Transverse colon (tissue), 4 donors: ENCODE measurements at regions of chr5 and their contacts with region 1.

Region 1: GRCh38 chr5:177064500-177065277 is 22.0 kb upstream of the FGFR4 start:
- DNase-seq: no peak
- H3K4me3 ChIP-seq: no peak overlapping the region
- H3K27ac ChIP-seq: no peak overlapping the region
- H3K4me1 ChIP-seq: peaks cover 0 to 9% (median 1%) of the 10 kb centered on the region in 4 donors
- H3K27me3 ChIP-seq: no peaks in the 10 kb centered on the region
- CTCF ChIP-seq: no peak
- EP300 ChIP-seq: no peak
- POLR2A ChIP-seq: no peak

Region 2: GRCh38 chr5:175789670-175790069 is 1275.0 kb before region 1 on chr5:
- in situ Hi-C with region 1: no loop called
- intact Hi-C with region 1: loop called (anchors 5 kb)
- DNase-seq: no peak
- H3K4me3 ChIP-seq: no peak overlapping the region
- H3K27ac ChIP-seq: no peak overlapping the region
- H3K4me1 ChIP-seq: no peaks in the 10 kb centered on the region
- H3K27me3 ChIP-seq: peaks cover 37% of the 10 kb centered on the region
- CTCF ChIP-seq: no peak
- EP300 ChIP-seq: no peak
- POLR2A ChIP-seq: no peak

Region 3: DNA sequence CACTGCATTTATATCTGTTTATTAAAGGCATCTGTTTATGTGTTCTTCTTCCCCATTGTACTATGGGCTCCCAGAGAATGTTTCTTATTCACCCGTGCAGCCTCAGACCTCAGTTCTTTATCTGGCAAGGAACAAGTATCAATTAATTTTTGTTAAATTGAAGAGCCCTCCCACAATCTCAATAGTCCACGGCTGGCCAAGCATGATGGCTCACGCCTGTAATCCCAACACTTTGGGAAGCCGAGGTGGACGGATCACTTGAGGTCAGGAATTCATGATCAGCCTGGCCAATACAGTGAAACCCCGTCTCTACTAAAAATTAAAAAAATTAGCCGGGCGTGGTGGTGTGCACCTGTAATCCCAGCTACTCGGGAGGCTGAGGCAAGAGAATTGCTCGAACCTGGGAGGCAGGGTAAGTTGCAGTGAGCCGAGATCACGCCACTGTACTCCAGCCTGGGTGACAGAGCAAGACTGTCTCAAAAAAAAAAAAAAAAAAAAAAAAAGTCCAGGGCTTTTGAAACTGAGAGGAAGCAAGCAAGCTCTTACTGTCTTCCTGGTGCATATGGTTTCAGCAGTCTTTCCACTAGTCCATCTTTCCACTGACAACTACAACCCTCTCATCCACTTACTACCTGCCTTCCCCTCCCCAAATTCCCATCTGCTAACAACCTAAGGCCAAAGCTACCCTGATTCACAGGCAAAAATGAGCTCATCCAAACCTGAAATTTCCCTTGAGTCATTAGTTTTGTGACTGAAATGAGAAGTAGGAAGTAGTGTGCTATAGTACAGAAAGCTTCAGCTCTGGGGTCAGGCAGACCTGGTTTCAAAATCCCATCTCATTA is 163.2 kb before region 1 on chr5:
- in situ Hi-C with region 1: no loop called
- intact Hi-C with region 1: no loop called
- DNase-seq: no peak
- H3K4me3 ChIP-seq: no peak overlapping the region
- H3K27ac ChIP-seq: no peak overlapping the region
- H3K4me1 ChIP-seq: no peaks in the 10 kb centered on the region
- H3K27me3 ChIP-seq: no peaks in the 10 kb centered on the region
- CTCF ChIP-seq: no peak
- EP300 ChIP-seq: no peak
- POLR2A ChIP-seq: no peak

Region 4: DNA sequence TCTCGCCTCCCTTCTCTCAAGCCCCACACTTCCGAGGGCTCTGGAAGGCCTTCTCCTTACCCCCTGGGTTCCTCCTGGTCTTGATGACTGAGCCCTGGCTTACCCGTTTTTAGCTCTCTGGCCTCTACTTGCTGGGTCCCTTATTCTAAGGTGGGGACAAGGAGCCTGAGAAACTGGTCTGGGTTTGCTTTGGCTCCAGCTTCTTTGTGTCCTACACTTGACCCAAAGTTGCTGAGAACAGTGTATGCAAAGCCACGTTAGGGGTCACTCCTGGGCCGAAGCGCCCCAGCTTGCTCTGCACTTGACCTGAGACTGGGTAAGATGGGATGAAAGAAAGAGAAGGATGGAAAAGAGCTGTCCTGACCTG is 41.4 kb before region 1 on chr5:
- in situ Hi-C with region 1: no loop called
- intact Hi-C with region 1: no loop called
- DNase-seq: no peak
- H3K4me3 ChIP-seq: peak overlapping the region; percentile 69 to 99 (median 84)
- H3K27ac ChIP-seq: peak overlapping the region; percentile 74 to 92 (median 84)
- H3K4me1 ChIP-seq: peaks cover 4 to 29% (median 16%) of the 10 kb centered on the region in 4 donors
- H3K27me3 ChIP-seq: no peaks in the 10 kb centered on the region
- CTCF ChIP-seq: no peak
- EP300 ChIP-seq: no peak
- POLR2A ChIP-seq: no peak

Region 5: GRCh38 chr5:177276886-177277285 is 212.2 kb after region 1 on chr5:
- in situ Hi-C with region 1: no loop called
- intact Hi-C with region 1: no loop called
- DNase-seq: no peak
- H3K4me3 ChIP-seq: no peak overlapping the region
- H3K27ac ChIP-seq: no peak overlapping the region
- H3K4me1 ChIP-seq: no peaks in the 10 kb centered on the region
- H3K27me3 ChIP-seq: no peaks in the 10 kb centered on the region
- CTCF ChIP-seq: no peak
- EP300 ChIP-seq: no peak
- POLR2A ChIP-seq: no peak

Region 6: DNA sequence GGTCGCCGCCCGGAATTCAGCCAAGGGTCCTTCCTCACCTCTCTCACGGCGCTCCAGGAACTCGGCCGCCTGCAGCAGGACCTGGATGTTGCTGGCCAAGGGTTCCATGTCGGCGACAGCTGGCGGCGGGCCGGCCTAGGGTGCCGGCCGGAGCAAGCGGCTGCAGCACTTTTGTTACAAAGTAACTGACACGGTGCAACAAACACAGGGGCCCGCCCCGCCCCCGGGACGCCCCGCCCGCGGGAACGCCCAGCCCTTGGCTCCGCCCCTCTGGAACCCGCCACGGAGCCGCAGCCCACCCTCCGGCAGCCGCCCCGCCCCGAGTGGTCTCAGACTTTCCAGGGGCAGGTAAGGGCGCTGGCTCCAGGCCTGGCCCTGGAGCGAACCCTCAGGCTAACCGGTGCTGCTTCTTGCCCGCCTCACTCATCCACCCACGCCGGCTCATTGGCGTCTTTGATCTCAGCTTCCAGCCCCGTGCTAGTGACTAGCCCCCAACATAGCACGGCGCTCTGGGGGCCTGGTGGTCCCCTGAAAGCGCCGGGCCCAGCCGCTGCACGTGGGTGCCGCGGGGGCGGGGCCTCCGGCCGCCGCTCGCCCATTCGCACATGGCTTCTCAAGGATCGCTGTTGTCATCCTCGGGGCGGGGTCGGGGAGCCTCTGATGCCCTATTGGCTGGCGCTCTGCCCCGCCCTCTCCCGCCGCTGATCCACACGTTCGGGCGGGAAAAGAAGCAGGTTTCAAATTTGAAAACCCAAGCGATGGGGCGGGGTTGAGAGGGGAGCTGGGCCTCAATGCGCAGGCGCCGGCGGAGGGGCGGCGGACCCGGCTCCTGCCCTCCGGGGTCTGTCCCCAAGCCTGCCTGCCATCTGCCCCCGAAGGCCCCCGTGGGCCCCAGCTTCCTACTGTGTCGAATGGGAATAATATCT is 247.3 kb after region 1 on chr5 and contains the start of gene MXD3:
- in situ Hi-C with region 1: no loop called
- intact Hi-C with region 1: no loop called
- DNase-seq: peak; percentile 98
- H3K4me3 ChIP-seq: peak within 1 kb of the TSS; percentile 2 to 76 (median 41)
- H3K27ac ChIP-seq: peak within 1 kb of the TSS; percentile 63 to 70 (median 67)
- H3K4me1 ChIP-seq: peaks cover 20 to 35% (median 27%) of the 10 kb centered on the region in 4 donors
- H3K27me3 ChIP-seq: no peaks in the 10 kb centered on the region
- CTCF ChIP-seq: no peak
- EP300 ChIP-seq: no peak
- POLR2A ChIP-seq: no peak
- total RNA-seq, gene MXD3: 10.8 to 257 (median 21.7) TPM